Endothelial cell of umbilical vein (primary cell): ENCODE measurements at regions of chr22 and their contacts with region 1.

Region 1: DNA sequence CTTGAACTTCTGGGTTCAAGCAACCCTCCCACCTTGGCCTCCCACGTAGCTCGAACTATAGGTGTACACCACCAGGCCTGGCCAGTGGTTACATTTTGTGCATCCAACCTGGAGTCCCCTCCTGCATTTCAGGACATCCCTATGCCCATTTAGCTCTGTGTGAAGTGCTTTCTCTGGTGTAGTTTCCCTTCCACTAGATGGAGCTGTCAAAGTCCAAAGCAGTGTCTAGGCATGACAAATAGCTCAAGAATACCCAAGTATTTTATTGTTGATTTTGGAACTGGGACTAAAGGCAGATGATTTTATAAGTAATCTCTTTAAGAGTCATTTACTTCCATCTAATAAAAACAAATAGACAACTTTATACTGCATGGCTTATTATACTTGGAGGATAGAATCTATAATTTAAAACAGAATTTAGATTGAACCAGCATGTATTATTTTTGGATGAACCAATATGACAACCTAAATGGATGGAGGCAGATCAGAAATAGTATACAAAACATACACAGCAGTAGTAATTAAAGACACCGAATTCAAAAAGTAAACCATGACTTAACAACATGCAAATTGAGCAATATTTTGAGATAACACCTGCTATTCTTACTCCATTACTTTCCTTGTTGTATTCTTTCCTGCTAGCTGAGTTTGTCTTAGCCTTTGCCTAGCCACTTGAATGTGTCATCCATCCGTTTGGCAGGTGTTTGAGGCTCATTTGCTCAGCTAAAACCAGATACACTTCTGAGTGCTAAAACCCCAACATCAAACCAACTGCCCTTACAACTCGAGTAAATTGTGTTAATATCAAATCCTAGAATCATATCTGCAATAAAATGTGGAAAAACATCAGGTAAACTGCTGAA is 37.7 kb downstream of the EIF4ENIF1 start:
- DNase-seq: peak; percentile 59
- H3K4me3 ChIP-seq: no peak overlapping the region
- H3K27ac ChIP-seq: no peak overlapping the region
- H3K4me1 ChIP-seq: no peaks in the 10 kb centered on the region
- H3K27me3 ChIP-seq: no peaks in the 10 kb centered on the region
- CTCF ChIP-seq: peak; percentile 46 to 53
- POLR2A ChIP-seq: no peak

Region 2: GRCh38 chr22:31436132-31436531 is 15.8 kb before region 1 on chr22:
- CTCF ChIA-PET with region 1: interaction called, 22 read pairs
- POLR2A ChIA-PET with region 1: interaction called, 3 read pairs
- dilution Hi-C with region 1: no loop called
- intact Hi-C with region 1: no loop called
- DNase-seq: no peak
- H3K4me3 ChIP-seq: no peak overlapping the region
- H3K27ac ChIP-seq: no peak overlapping the region
- H3K4me1 ChIP-seq: peaks cover 4% of the 10 kb centered on the region
- H3K27me3 ChIP-seq: no peaks in the 10 kb centered on the region
- CTCF ChIP-seq: no peak
- POLR2A ChIP-seq: no peak

Region 3: GRCh38 chr22:31637938-31638618 is 186.1 kb after region 1 on chr22:
- CTCF ChIA-PET with region 1: interaction called, 32 read pairs
- POLR2A ChIA-PET with region 1: no interaction called
- dilution Hi-C with region 1: no loop called
- intact Hi-C with region 1: loop called (anchors 1 kb)
- DNase-seq: peak; percentile 25
- H3K4me3 ChIP-seq: no peak overlapping the region
- H3K27ac ChIP-seq: peak overlapping the region; percentile 65
- H3K4me1 ChIP-seq: peaks cover 15% of the 10 kb centered on the region
- H3K27me3 ChIP-seq: no peaks in the 10 kb centered on the region
- CTCF ChIP-seq: no peak
- POLR2A ChIP-seq: no peak

Region 4: DNA sequence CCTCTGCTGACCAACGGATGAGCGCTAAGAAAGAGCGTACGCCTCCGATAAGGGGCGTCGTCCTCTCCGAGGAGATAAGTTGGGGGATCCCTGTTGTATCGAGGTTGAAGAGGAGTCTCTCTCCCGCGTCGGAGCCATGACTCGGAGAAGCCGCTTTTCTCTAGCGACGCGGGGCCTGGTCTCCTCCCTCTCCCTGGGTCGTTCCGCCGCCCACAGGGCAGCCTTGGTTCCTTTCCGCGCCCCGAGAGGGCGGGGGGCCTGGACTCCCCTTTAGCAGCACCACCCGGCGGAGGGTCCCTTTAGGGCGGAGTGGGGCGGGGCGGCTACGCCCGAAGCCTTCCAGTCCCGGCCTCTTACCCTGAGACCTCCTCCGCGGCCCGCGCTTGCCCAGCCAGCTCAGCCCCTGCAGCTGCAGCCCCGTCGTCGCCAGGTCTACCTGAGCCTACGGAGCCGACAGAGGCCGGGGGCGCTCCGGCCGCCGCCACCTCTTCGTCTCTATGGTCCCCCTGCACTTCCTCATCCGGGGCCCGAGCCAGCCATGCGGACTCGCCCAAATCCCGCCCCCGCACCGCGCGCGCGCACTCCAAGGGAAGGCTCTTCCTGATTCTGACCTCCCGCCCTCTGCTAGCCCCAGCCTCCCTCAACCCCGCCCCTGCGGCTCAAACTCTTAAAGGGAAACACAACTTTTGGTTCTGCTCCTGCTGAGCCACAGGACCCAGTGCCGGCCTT is 297.9 kb after region 1 on chr22 and contains the start of gene PRR14L:
- CTCF ChIA-PET with region 1: no interaction called
- POLR2A ChIA-PET with region 1: no interaction called
- dilution Hi-C with region 1: no loop called
- intact Hi-C with region 1: no loop called
- DNase-seq: peak; percentile 96
- H3K4me3 ChIP-seq: peak within 1 kb of the TSS; percentile 75 to 89 (median 82)
- H3K27ac ChIP-seq: peak within 1 kb of the TSS; percentile 66
- H3K4me1 ChIP-seq: peaks cover 37% of the 10 kb centered on the region
- H3K27me3 ChIP-seq: no peaks in the 10 kb centered on the region
- CTCF ChIP-seq: no peak
- POLR2A ChIP-seq: peak; percentile 93
- total RNA-seq, gene PRR14L: 47.5 and 53.8 TPM in 2 replicates